Tibial artery (tissue), 4 donors: ENCODE measurements at regions of chr2 and their contacts with region 1.

Region 1: GRCh38 chr2:31333527-31334183 is 80.9 kb downstream of the XDH start:
- DNase-seq: peak; percentile 87
- H3K4me3 ChIP-seq: no peak overlapping the region
- H3K27ac ChIP-seq: no peak overlapping the region
- H3K4me1 ChIP-seq: peaks cover 0 to 8% (median 1%) of the 10 kb centered on the region in 4 donors
- H3K27me3 ChIP-seq: no peaks in the 10 kb centered on the region
- CTCF ChIP-seq: peak; percentile 95

Region 2: DNA sequence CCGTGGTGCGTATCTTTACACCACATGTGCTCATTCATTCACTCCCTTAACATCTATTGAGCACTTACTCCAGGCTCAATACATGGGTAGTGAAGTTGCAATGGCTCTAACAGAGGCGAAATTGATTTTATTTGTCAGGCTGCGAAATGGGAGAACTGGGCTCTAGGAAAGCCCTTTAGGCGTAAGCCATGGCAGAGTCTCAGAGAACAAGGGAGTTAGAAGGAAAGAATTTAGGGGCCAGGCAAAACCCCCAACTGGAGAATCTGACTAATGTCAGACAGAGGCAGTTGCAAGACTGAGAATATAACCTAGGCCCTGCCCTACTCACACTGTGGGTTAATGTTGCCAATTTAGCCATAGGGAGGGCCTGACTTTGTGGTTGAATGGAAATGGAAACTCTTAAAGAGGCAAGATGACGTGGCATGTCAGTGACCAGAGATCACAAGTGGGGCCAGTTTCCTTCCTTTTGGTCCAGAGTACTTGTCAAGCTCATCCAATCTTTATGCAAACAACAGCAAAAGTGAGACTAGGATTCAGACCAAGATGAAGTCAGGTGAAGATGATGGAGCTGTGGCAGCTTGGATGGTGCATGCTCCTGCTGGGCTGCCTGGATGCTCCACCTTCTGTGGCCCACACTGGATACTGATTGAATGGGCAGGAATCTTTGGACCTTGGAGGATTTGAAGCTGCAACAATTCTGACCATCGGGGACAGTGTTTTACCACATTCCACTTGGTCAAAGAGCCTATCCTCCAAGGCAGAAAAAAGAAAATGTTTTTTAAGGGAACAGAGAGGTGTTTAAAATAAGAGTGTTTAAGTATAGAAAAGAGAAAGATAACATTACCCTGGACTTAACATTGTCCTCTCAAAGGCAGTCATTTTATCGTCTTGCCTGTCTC is 618.6 kb before region 1 on chr2:
- intact Hi-C with region 1: loop called (anchors 2 kb)
- DNase-seq: peak in 1 of 2 donors; percentile 23
- H3K4me3 ChIP-seq: no peak overlapping the region
- H3K27ac ChIP-seq: no peak overlapping the region
- H3K4me1 ChIP-seq: peaks cover 0 to 4% (median under 1%) of the 10 kb centered on the region in 4 donors
- H3K27me3 ChIP-seq: no peaks in the 10 kb centered on the region
- CTCF ChIP-seq: no peak

Region 3: DNA sequence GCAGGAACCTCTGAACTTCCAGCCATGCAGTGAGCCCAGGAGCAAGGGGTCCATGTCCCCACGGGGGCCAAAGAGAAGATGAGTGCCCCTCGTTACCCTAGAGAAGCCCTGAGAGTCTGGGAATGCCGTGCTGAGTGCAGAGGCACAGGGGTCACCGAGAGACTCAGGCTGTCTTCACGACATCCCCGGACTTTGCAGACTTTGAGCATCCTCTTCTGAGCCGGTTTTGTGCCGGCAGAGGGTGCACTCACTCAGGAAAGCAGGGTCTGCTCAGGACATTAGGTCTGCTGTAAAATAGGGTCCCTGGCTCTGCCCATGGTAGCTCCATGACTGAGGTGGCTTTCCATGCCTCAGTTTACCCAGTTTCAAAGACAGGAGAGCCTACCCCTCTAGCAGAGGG is 266.4 kb before region 1 on chr2:
- intact Hi-C with region 1: loop called (anchors 10 kb)
- DNase-seq: no peak
- H3K4me3 ChIP-seq: no peak overlapping the region
- H3K27ac ChIP-seq: no peak overlapping the region
- H3K4me1 ChIP-seq: no peaks in the 10 kb centered on the region
- H3K27me3 ChIP-seq: peaks cover 0 to 5% of the 10 kb centered on the region in 2 donors
- CTCF ChIP-seq: no peak

Region 4: GRCh38 chr2:31140151-31140550 is 193.5 kb before region 1 on chr2:
- intact Hi-C with region 1: loop called (anchors 10 kb)
- DNase-seq: no peak
- H3K4me3 ChIP-seq: no peak overlapping the region
- H3K27ac ChIP-seq: no peak overlapping the region
- H3K4me1 ChIP-seq: peaks cover 3 to 22% (median 18%) of the 10 kb centered on the region in 4 donors
- H3K27me3 ChIP-seq: peaks cover 0 to 25% of the 10 kb centered on the region in 2 donors
- CTCF ChIP-seq: no peak

Region 5: GRCh38 chr2:31233741-31234682 is 99.6 kb before region 1 on chr2 and contains the start of gene EHD3:
- intact Hi-C with region 1: loop called (anchors 5 kb)
- DNase-seq: peak; percentile 84 to 93
- H3K4me3 ChIP-seq: peak within 1 kb of the TSS; percentile 54 to 63
- H3K27ac ChIP-seq: peak within 1 kb of the TSS; percentile 66 to 82
- H3K4me1 ChIP-seq: peaks cover 0 to 43% (median 32%) of the 10 kb centered on the region in 4 donors
- H3K27me3 ChIP-seq: no peaks in the 10 kb centered on the region
- CTCF ChIP-seq: peak; percentile 61 to 67